ENCODE measurements at regions of chr10 and their contacts with region 1.

Region 1: GRCh38 chr10:72273410-72274212 is at the start of gene DDIT4:
- DNase-seq: peak; percentile 94 to 99 (median 97)
- ATAC-seq: peak; percentile 94
- H3K4me3 ChIP-seq: peak within 1 kb of the TSS; percentile 69 to 99
- H3K4me3 Mint-ChIP-seq: peak within 1 kb of the TSS; percentile 98
- H3K27ac ChIP-seq: peak within 1 kb of the TSS; percentile 82 to 83
- H3K27ac Mint-ChIP-seq: peak within 1 kb of the TSS; percentile 93
- H3K4me1 ChIP-seq: peaks cover 30% of the 10 kb centered on the region
- H3K4me1 Mint-ChIP-seq: peaks cover 52% of the 10 kb centered on the region
- H3K27me3 ChIP-seq: no peaks in the 10 kb centered on the region
- H3K27me3 Mint-ChIP-seq: no peaks in the 10 kb centered on the region
- CTCF ChIP-seq: no peak
- total RNA-seq, gene DDIT4: 351 to 360 TPM

Region 2: GRCh38 chr10:72215652-72216549 is 57.7 kb before region 1 on chr10 and contains the starts of genes ANAPC16 and ASCC1:
- CTCF ChIA-PET with region 1: interaction called, 17 read pairs
- POLR2A ChIA-PET with region 1: interaction called, 11 read pairs
- intact Hi-C with region 1: loop called in 1 of 2 experiments (anchors 1 kb)
- DNase-seq: peak; percentile 90 to 98 (median 95)
- ATAC-seq: peak; percentile 83
- H3K4me3 ChIP-seq: peak within 1 kb of the TSS; percentile 78 to 82
- H3K4me3 Mint-ChIP-seq: peak within 1 kb of the TSS; percentile 100
- H3K27ac ChIP-seq: peak within 1 kb of the TSS; percentile 61 to 93
- H3K27ac Mint-ChIP-seq: peak within 1 kb of the TSS; percentile 100
- H3K4me1 ChIP-seq: peaks cover 58% of the 10 kb centered on the region
- H3K4me1 Mint-ChIP-seq: peaks cover 54% of the 10 kb centered on the region
- H3K27me3 ChIP-seq: no peaks in the 10 kb centered on the region
- H3K27me3 Mint-ChIP-seq: no peaks in the 10 kb centered on the region
- CTCF ChIP-seq: no peak
- total RNA-seq, gene ANAPC16: 46.6 to 48.0 TPM
- total RNA-seq, gene ASCC1: 16.5 to 19.1 TPM

Region 3: GRCh38 chr10:72254813-72255568 is 18.6 kb before region 1 on chr10:
- CTCF ChIA-PET with region 1: interaction called, 39 read pairs
- POLR2A ChIA-PET with region 1: interaction called, 19 read pairs
- intact Hi-C with region 1: no loop called
- DNase-seq: peak in 7 of 9 experiments; percentile 23 to 66 (median 48)
- ATAC-seq: peak; percentile 64
- H3K4me3 ChIP-seq: peak overlapping the region; percentile 6 to 46
- H3K4me3 Mint-ChIP-seq: peak overlapping the region; percentile 72
- H3K27ac ChIP-seq: peak overlapping the region in 1 of 2 experiments; percentile 14
- H3K27ac Mint-ChIP-seq: peak overlapping the region; percentile 92
- H3K4me1 ChIP-seq: peaks cover 83% of the 10 kb centered on the region
- H3K4me1 Mint-ChIP-seq: peaks cover 71% of the 10 kb centered on the region
- H3K27me3 ChIP-seq: no peaks in the 10 kb centered on the region
- H3K27me3 Mint-ChIP-seq: no peaks in the 10 kb centered on the region
- CTCF ChIP-seq: no peak

Region 4: GRCh38 chr10:72285972-72286521 is 12.4 kb after region 1 on chr10:
- CTCF ChIA-PET with region 1: interaction called, 30 read pairs
- POLR2A ChIA-PET with region 1: interaction called, 5 read pairs
- intact Hi-C with region 1: no loop called
- DNase-seq: no peak
- ATAC-seq: no peak
- H3K4me3 ChIP-seq: no peak overlapping the region
- H3K4me3 Mint-ChIP-seq: no peak overlapping the region
- H3K27ac ChIP-seq: no peak overlapping the region
- H3K27ac Mint-ChIP-seq: no peak overlapping the region
- H3K4me1 ChIP-seq: peaks cover 22% of the 10 kb centered on the region
- H3K4me1 Mint-ChIP-seq: peaks cover 33% of the 10 kb centered on the region
- H3K27me3 ChIP-seq: no peaks in the 10 kb centered on the region
- H3K27me3 Mint-ChIP-seq: no peaks in the 10 kb centered on the region
- CTCF ChIP-seq: no peak

Region 5: GRCh38 chr10:72297968-72298773 is 24.6 kb after region 1 on chr10:
- CTCF ChIA-PET with region 1: interaction called, 4 read pairs
- POLR2A ChIA-PET with region 1: interaction called, 32 read pairs
- intact Hi-C with region 1: loop called (anchors 1 kb)
- DNase-seq: peak; percentile 68 to 96 (median 83)
- ATAC-seq: peak; percentile 58
- H3K4me3 ChIP-seq: peak overlapping the region; percentile 53 to 57
- H3K4me3 Mint-ChIP-seq: peak overlapping the region; percentile 72
- H3K27ac ChIP-seq: peak overlapping the region; percentile 70 to 96
- H3K27ac Mint-ChIP-seq: peak overlapping the region; percentile 80
- H3K4me1 ChIP-seq: peaks cover 38% of the 10 kb centered on the region
- H3K4me1 Mint-ChIP-seq: peaks cover 41% of the 10 kb centered on the region
- H3K27me3 ChIP-seq: no peaks in the 10 kb centered on the region
- H3K27me3 Mint-ChIP-seq: no peaks in the 10 kb centered on the region
- CTCF ChIP-seq: no peak

Region 6: GRCh38 chr10:72337020-72337629 is 63.5 kb after region 1 on chr10:
- CTCF ChIA-PET with region 1: interaction called, 106 read pairs
- POLR2A ChIA-PET with region 1: interaction called, 20 read pairs
- intact Hi-C with region 1: loop called (anchors 1 kb)
- DNase-seq: peak in 8 of 9 experiments; percentile 46 to 85 (median 72)
- ATAC-seq: no peak
- H3K4me3 ChIP-seq: no peak overlapping the region
- H3K4me3 Mint-ChIP-seq: no peak overlapping the region
- H3K27ac ChIP-seq: no peak overlapping the region
- H3K27ac Mint-ChIP-seq: peak overlapping the region; percentile 66
- H3K4me1 ChIP-seq: peaks cover 55% of the 10 kb centered on the region
- H3K4me1 Mint-ChIP-seq: peaks cover 55% of the 10 kb centered on the region
- H3K27me3 ChIP-seq: no peaks in the 10 kb centered on the region
- H3K27me3 Mint-ChIP-seq: no peaks in the 10 kb centered on the region
- CTCF ChIP-seq: peak; percentile 96